ENCODE measurements at regions of chr21 and their contacts with region 1.

Region 1: GRCh38 chr21:17387030-17387617 is 125.7 kb upstream of the CXADR start:
- DNase-seq: peak; percentile 84
- ATAC-seq: peak; percentile 59
- H3K4me3 ChIP-seq: no peak overlapping the region
- H3K27ac ChIP-seq: no peak overlapping the region
- H3K4me1 ChIP-seq: peaks cover 5% of the 10 kb centered on the region
- H3K27me3 ChIP-seq: no peaks in the 10 kb centered on the region
- CTCF ChIP-seq: peak; percentile 90

Region 2: GRCh38 chr21:17554679-17555465 is 167.7 kb after region 1 on chr21:
- CTCF ChIA-PET with region 1: interaction called, 18 read pairs
- POLR2A ChIA-PET with region 1: no interaction called
- intact Hi-C with region 1: no loop called
- DNase-seq: peak; percentile 20
- ATAC-seq: 0 out of 2 replicates have a peak, but pooled peaks have one; percentile 33
- H3K4me3 ChIP-seq: no peak overlapping the region
- H3K27ac ChIP-seq: no peak overlapping the region
- H3K4me1 ChIP-seq: 0 out of 2 replicates have a peak, but pooled peaks cover under 1% of the 10 kb centered on the region
- H3K27me3 ChIP-seq: no peaks in the 10 kb centered on the region
- CTCF ChIP-seq: peak; percentile 56; the same call in 1 of the 2 replicates

Region 3: DNA sequence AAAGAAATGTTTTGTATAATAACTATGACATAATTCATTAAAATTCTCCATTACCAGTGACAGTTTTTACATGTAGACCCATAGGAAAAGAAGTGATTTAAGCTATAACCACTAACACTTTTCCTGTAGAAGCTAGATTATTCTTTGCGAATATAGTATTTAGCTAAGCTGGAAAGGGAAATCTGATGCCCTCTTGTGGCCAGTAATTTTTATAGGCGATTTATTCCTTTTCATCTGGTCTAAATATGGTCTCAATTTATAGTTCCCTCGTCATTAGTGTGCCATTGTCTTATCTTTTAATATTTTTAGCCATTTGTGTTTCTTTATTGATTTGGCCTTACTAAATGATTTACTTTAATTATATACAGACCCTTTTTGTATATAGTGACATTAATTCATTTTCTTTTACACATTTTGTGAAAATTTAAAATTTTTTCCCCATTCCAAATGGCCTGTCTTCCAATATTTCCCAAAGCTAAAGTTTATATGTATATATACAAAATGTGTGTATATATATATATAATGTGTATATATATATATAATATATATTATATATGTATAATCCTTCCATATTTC is 198.8 kb after region 1 on chr21:
- CTCF ChIA-PET with region 1: interaction called, 17 read pairs
- POLR2A ChIA-PET with region 1: no interaction called
- intact Hi-C with region 1: loop called (anchors 1 kb)
- DNase-seq: peak; percentile 73
- ATAC-seq: no peak; the same call in 1 of the 2 replicates
- H3K4me3 ChIP-seq: no peak overlapping the region
- H3K27ac ChIP-seq: no peak overlapping the region
- H3K4me1 ChIP-seq: no peaks in the 10 kb centered on the region
- H3K27me3 ChIP-seq: no peaks in the 10 kb centered on the region; the same call in 1 of the 2 replicates
- CTCF ChIP-seq: peak; percentile 63

Region 4: GRCh38 chr21:17903029-17903806 is 516.1 kb after region 1 on chr21:
- CTCF ChIA-PET with region 1: no interaction called
- POLR2A ChIA-PET with region 1: no interaction called
- intact Hi-C with region 1: loop called (anchors 1 kb)
- DNase-seq: peak; percentile 73
- ATAC-seq: peak; percentile 49; the same call in 1 of the 2 replicates
- H3K4me3 ChIP-seq: no peak overlapping the region
- H3K27ac ChIP-seq: no peak overlapping the region
- H3K4me1 ChIP-seq: peaks cover 6% of the 10 kb centered on the region
- H3K27me3 ChIP-seq: no peaks in the 10 kb centered on the region
- CTCF ChIP-seq: 0 out of 2 replicates have a peak, but pooled peaks have one; percentile 49

Measured in PC-3 (cell line).